ENCODE measurements at regions of chr9 and their contacts with region 1.

Region 1: DNA sequence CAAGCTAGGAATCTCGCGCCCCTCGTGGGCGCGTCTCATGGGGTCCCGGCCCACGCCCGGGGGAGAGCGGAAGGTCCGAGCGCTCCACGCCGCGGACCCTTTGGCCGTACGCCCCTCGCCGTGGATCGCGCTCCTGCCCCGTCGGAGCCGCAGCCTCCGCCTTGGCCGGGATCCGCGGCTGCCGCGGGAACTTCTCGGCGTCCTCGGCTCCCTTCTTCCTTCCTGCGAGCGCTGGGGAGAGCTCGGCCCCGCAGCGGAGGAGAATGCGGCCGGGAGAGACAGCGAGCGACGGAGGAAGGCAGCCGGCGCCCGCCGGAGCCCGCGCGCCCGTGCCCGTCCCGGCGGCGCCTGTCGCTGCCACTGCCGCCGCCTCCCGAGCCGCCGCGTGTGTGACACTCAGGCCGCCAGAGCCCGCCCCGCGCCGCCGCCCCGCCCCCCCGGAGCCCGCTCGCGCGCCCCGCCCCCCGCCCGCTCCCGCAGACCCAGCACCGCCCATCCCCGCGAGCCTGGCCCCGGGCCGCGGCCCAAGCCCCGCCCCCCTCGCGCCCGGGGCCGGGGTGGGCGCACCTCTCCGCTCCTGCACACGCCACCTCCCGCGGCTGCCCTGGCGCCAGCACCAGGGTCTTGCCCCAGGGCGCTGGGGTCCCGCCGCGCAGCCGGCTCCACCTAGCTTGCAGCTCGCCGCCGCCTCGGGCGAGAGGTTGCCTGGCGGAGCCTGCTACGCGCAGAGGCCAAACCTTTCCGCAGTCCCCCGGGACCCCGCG is at the start of gene SHB:
- DNase-seq: peak; percentile 53
- H3K4me3 Mint-ChIP-seq: peak within 1 kb of the TSS; percentile 87
- H3K27ac Mint-ChIP-seq: no peak within 1 kb of the TSS
- H3K4me1 Mint-ChIP-seq: peaks cover 26% of the 10 kb centered on the region
- H3K27me3 Mint-ChIP-seq: no peaks in the 10 kb centered on the region
- CTCF ChIP-seq: no peak
- total RNA-seq, gene SHB: 22.3 and 29.6 TPM in 2 replicates

Region 2: DNA sequence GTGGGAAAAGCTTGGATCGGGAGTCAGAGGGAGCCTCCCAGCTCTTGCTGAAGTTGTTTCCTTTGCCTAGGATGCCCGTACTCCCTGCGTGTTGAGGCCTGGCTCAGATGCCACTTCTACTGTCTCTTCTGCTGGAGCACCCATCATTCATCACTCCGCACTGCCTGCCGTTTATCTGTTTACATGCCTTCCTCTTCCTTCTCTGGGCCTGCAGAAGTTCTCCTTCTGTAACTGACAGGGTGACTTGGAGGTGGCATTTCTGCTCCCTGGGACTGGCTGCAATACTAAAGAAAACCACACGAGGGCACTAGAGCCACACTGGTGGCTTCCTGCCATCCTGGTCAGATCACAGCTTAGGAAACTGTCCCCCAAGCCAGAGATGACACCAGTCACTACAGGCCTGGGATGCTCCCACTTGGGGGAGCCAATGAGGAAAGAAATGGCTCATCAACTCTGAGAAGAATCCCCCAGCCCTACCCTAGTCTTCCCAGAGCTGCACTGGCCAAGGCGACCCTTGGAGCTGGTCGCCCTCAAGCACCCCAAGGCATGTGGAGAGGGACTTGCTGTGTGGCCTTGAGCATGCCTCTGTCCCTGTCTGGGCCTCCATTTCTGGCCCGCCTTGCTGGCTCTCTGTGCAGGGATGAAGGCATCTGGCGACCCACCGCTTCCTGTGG is 155.4 kb before region 1 on chr9:
- CTCF ChIA-PET with region 1: interaction called, 59 read pairs
- POLR2A ChIA-PET with region 1: interaction called, 5 read pairs
- intact Hi-C with region 1: loop called (anchors 2 kb)
- DNase-seq: peak; percentile 77
- H3K4me3 Mint-ChIP-seq: no peak overlapping the region
- H3K27ac Mint-ChIP-seq: no peak overlapping the region
- H3K4me1 Mint-ChIP-seq: peaks cover 14% of the 10 kb centered on the region
- H3K27me3 Mint-ChIP-seq: no peaks in the 10 kb centered on the region
- CTCF ChIP-seq: peak; percentile 97

Region 3: DNA sequence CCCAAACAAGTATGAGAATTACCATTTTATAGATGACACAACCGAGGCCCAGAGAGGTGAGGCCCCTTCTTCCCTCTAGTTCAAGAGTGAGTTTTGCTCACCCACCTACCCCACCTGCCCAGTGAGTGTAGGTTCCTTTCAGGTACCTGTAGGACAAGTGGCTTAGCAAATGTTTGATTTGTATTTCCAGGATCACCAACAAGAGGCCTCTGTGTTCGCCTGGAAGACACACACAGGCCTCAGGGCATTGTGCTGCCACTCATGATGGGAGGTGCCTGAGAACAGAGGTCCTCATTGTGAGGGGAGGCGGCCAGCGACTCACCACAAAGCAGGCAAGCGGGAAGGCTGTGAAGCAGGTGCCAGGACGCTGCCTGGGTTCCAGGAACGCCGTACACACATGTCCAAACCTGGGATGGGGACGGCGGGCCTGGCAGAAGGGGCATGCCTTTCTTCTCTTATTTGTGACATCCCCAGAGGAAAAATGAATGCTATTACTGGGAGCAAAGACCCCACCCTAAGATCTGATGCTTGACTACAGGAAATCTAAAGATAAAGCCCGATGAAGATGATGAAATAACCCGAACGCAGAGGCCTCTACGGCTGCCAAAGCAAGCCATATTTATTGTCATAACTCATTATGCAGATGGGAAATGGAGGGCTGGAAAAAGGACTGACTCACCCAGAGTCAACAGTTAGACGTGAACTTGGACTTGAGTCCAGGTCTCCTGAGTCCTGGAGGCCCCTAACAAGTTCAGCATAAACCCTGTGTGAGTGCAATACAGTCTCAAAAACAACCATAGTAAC is 104.9 kb before region 1 on chr9:
- CTCF ChIA-PET with region 1: interaction called, 6 read pairs
- POLR2A ChIA-PET with region 1: interaction called, 6 read pairs
- intact Hi-C with region 1: loop called (anchors 1 kb)
- DNase-seq: peak; percentile 89
- H3K4me3 Mint-ChIP-seq: no peak overlapping the region
- H3K27ac Mint-ChIP-seq: peak overlapping the region; percentile 92
- H3K4me1 Mint-ChIP-seq: peaks cover 50% of the 10 kb centered on the region
- H3K27me3 Mint-ChIP-seq: no peaks in the 10 kb centered on the region
- CTCF ChIP-seq: no peak

Region 4: GRCh38 chr9:38008168-38009034 is 60.6 kb before region 1 on chr9:
- CTCF ChIA-PET with region 1: interaction called, 12 read pairs
- POLR2A ChIA-PET with region 1: interaction called, 16 read pairs
- intact Hi-C with region 1: no loop called
- DNase-seq: peak; percentile 93
- H3K4me3 Mint-ChIP-seq: no peak overlapping the region
- H3K27ac Mint-ChIP-seq: peak overlapping the region; percentile 99
- H3K4me1 Mint-ChIP-seq: peaks cover 44% of the 10 kb centered on the region
- H3K27me3 Mint-ChIP-seq: no peaks in the 10 kb centered on the region
- CTCF ChIP-seq: no peak

Region 5: DNA sequence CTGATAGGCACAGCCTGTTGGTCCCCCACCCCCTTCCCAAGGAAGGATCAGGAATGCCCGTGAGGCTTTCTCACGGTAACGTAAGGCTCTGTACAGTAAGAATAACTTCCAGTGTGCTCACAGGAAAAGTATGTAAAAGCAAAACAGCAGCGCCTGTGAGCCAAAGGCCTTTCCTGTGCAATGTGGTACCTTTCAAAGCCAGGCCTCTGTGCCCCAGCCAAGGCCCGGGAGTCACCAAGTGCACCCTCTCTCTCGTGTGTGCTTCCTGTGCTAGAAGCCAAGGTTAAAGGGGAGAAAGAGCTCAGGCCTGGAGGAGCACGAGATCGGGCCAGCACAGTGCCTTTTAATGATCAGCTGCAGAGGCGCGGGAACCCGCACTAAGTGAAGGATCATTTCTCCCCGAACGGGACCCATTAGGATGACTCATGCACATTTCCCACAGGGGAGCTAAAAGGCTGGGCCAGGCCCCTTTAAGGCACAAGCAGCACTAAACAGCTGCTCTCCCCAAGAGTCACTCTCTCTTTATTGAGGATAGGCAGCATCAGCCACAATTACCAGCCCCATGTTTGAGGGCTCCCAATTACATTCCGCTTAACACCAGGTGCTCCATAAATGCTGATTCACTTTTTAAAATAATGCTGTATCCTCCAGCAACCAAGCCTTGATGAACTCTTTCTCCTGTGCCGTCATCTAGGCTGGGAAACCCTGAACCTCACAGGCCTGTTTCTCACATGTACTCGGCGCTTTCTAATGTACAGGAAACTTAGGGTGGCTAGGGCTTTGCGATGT is 42.8 kb before region 1 on chr9:
- CTCF ChIA-PET with region 1: interaction called, 48 read pairs
- POLR2A ChIA-PET with region 1: interaction called, 41 read pairs
- intact Hi-C with region 1: loop called (anchors 2 kb)
- DNase-seq: peak; percentile 88
- H3K4me3 Mint-ChIP-seq: peak overlapping the region; percentile 38
- H3K27ac Mint-ChIP-seq: peak overlapping the region; percentile 83
- H3K4me1 Mint-ChIP-seq: peaks cover 44% of the 10 kb centered on the region
- H3K27me3 Mint-ChIP-seq: no peaks in the 10 kb centered on the region
- CTCF ChIP-seq: no peak

Region 6: DNA sequence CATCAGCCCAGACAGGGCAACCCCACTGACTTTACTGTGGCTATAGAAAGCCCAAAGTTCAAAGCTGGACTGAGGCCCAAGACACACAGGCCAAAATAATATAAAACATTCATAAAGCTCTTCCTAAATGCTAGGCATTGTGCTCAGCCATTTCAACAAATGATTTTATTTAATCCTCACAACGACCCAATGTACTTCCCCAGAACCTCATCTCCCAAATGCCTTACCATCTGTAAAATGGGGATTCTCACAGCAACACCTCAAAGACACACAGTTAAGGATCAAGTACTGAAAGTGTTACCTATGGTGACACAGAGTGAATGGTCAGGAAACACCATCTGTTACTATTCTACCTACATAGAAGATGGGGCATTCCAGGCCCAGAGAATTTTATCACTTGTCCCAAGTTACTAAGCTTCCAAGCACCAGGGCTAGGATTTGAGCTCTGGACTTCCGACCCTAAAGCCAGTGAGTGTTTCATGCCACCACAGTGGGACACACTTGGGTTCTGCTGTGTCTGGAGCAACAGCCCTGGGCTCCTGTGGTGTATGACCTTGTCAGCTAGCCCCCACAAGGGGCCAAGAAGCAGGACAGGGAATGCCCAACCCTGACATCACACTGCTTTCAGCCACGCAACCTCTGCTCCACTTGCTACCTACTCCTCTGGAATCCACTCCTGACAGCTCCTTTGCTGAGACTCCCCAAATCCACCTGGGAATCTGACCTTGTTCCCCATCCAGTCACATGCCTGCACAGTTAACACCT is 15.2 kb before region 1 on chr9:
- CTCF ChIA-PET with region 1: interaction called, 13 read pairs
- POLR2A ChIA-PET with region 1: interaction called, 26 read pairs
- intact Hi-C with region 1: no loop called
- DNase-seq: no peak
- H3K4me3 Mint-ChIP-seq: no peak overlapping the region
- H3K27ac Mint-ChIP-seq: no peak overlapping the region
- H3K4me1 Mint-ChIP-seq: peaks cover 24% of the 10 kb centered on the region
- H3K27me3 Mint-ChIP-seq: no peaks in the 10 kb centered on the region
- CTCF ChIP-seq: no peak

Region 7: DNA sequence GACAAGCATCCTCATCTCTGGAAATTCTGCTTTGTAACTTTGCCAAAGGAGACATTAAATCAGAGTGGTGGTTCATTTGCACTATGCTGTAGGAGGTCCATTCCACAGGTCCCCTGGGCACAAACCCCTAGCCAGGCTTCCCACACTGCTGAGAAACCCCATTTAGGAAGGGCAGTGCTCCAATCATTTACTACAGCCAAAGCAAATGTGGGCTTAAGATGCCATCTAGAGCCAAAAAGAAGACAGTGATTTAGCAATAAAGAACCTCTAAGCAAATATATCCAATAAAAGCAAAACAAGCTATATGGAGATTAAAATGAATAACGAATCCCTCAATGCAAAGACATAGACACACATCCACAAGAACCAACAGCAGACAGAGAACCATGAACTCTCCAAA is 194.5 kb after region 1 on chr9:
- CTCF ChIA-PET with region 1: interaction called, 8 read pairs
- POLR2A ChIA-PET with region 1: no interaction called
- intact Hi-C with region 1: loop called (anchors 5 kb)
- DNase-seq: peak; percentile 43
- H3K4me3 Mint-ChIP-seq: no peak overlapping the region
- H3K27ac Mint-ChIP-seq: no peak overlapping the region
- H3K4me1 Mint-ChIP-seq: no peaks in the 10 kb centered on the region
- H3K27me3 Mint-ChIP-seq: peaks cover 67% of the 10 kb centered on the region
- CTCF ChIP-seq: peak; percentile 48

Measured in MCF 10A (cell line).